Dorsolateral prefrontal cortex (tissue), 120 donors: ENCODE measurements at regions of chr7 and their contacts with region 1.

Region 1: DNA sequence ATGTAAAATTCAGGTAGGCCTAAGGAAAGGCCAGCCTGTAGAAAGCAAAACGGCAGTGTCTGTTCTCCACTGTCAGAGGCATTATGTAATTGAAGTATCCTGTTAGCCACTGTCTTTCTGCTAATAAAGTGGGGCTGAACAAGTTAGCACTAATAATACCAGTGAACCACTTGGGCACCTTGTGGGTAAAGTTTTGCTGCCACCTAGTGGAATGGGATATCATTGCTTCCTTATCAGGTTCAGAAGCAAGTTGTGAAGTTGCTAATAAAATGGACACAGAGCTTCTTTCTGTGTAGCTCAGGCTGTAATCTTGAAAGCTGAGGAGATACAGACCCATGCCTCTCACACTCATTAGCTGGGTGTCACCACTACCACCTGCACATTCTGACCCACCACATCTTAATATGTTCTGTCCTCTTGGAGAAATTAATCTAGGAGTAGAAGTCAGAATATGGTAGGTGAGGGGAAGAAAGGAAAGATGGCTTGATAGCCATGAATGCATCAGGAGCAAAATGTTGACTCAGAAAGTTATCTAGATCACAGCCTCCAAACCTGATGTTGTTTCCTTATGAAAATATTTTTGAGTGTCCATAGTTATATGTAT is 175.1 kb downstream of the SEPTIN7 start:
- DNase-seq: peak in 3 of 10 donors; percentile 44 to 57 (median 48)
- H3K4me3 ChIP-seq: no peak overlapping the region
- H3K27ac ChIP-seq: peak overlapping the region in 1 of 59 donors; percentile 22
- H3K27me3 ChIP-seq: no peaks in the 10 kb centered on the region
- CTCF ChIP-seq: peak; percentile 77 to 97 (median 90)

Region 2: GRCh38 chr7:35694781-35695472 is 281.0 kb before region 1 on chr7 and contains the start of gene HERPUD2:
- intact Hi-C with region 1: loop called in 1 of 2 experiments (anchors 5 kb)
- DNase-seq: peak; percentile 92 to 96 (median 94)
- H3K4me3 ChIP-seq: peak within 1 kb of the TSS; percentile 67 to 100 (median 94)
- H3K27ac ChIP-seq: peak within 1 kb of the TSS; percentile 36 to 98 (median 93)
- H3K27me3 ChIP-seq: no peaks in the 10 kb centered on the region
- CTCF ChIP-seq: peak in 35 of 56 donors; percentile 2 to 62 (median 37)
- total RNA-seq, gene HERPUD2: 24.1 to 66.9 (median 36.4) TPM

Region 3: DNA sequence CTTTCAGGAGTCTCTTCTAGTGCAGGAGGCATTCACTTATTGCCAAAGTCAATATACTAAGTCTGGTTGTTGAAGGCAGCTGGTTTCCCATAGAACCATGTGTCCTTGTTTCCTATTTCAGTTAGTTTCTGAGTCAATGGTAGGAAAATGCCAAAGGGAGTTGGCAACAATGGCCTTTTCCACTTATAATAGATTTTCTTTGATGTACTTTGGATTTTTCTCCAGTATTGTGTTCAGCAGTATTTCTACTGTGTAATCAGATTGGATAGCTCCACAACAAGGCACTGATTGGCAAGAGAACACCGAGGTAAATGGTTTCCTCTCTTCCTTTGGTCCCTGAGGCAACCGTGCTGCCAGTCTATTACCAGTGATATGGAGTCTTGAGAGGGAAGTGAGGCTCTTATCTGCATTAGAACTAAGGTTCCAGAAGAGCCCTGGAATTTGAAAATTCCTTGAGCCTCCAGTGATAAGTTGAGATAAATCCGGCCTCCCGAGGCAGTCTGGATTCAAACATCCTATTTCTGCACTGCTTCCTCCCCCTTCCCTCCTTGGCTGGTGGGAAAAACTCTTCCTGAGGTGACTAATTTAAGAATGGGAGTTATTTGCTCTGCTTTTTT is 183.0 kb before region 1 on chr7:
- intact Hi-C with region 1: no loop called
- DNase-seq: no peak
- H3K4me3 ChIP-seq: peak overlapping the region in 1 of 59 donors; percentile 20
- H3K27ac ChIP-seq: peak overlapping the region in 58 of 59 donors; percentile 7 to 89 (median 76)
- H3K27me3 ChIP-seq: no peaks in the 10 kb centered on the region
- CTCF ChIP-seq: peak in 1 of 56 donors; percentile 13

Region 4: GRCh38 chr7:35906191-35906908 is 69.6 kb before region 1 on chr7:
- intact Hi-C with region 1: loop called in 1 of 2 experiments (anchors 10 kb)
- DNase-seq: peak in 4 of 10 donors; percentile 50 to 75 (median 72)
- H3K4me3 ChIP-seq: no peak overlapping the region
- H3K27ac ChIP-seq: peak overlapping the region in 58 of 59 donors; percentile 17 to 90 (median 79)
- H3K27me3 ChIP-seq: no peaks in the 10 kb centered on the region
- CTCF ChIP-seq: peak; percentile 82 to 99 (median 94)